Colonic mucosa (tissue), 4 donors: ENCODE measurements at regions of chr13 and their contacts with region 1.

Region 1: DNA sequence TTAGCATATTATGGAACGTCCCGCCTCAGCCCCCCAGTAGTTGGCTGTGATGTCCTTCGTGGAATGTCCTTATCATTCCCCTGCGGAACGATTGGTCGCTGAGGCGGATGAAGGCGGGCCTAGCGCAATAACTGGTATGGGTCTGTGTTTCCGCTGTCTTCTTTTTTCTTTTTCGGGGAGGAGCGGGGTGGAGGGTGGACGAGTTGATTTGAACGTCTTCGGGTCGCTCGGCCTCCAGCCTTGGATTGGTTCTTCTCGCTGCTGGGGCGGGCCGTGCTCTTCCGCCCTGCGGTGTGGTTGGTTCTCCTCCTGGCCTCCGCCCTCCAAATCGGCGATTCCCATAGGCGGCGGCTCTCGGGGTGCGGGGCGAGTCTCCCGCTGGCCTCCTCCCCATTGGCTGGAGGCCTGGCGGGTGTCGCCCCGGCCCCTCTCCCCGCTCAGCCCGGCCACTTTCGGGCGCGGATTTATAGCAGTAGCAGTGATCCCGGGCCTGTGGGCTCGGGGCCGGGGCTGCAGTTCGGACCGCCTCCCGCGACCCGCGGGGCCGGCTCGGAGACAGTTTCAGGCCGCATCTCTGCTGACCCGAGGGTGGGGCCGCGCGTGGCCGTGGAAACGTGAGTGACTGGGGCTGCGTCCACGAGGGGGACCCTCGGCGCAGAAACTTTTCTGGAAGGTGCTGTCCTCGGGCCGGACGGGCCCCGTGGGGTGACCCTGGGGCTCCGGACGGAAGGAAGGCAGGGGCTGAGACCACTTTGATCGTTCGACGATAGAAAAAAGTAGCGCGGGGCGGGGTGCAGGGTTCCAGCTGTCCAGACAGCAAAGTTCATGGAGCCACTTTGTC is 2.1 kb downstream of the ING1 start:
- DNase-seq: peak; percentile 99
- H3K4me3 ChIP-seq: peak overlapping the region; percentile 92
- H3K27ac ChIP-seq: peak overlapping the region; percentile 100
- H3K4me1 ChIP-seq: peaks cover 3% of the 10 kb centered on the region
- H3K27me3 ChIP-seq: no peaks in the 10 kb centered on the region
- CTCF ChIP-seq: no peak

Region 2: GRCh38 chr13:110853235-110853721 is 137.7 kb after region 1 on chr13:
- intact Hi-C with region 1: no loop called
- DNase-seq: no peak
- H3K4me3 ChIP-seq: no peak overlapping the region
- H3K27ac ChIP-seq: no peak overlapping the region
- H3K4me1 ChIP-seq: no peaks in the 10 kb centered on the region
- H3K27me3 ChIP-seq: no peaks in the 10 kb centered on the region
- CTCF ChIP-seq: no peak

Region 3: DNA sequence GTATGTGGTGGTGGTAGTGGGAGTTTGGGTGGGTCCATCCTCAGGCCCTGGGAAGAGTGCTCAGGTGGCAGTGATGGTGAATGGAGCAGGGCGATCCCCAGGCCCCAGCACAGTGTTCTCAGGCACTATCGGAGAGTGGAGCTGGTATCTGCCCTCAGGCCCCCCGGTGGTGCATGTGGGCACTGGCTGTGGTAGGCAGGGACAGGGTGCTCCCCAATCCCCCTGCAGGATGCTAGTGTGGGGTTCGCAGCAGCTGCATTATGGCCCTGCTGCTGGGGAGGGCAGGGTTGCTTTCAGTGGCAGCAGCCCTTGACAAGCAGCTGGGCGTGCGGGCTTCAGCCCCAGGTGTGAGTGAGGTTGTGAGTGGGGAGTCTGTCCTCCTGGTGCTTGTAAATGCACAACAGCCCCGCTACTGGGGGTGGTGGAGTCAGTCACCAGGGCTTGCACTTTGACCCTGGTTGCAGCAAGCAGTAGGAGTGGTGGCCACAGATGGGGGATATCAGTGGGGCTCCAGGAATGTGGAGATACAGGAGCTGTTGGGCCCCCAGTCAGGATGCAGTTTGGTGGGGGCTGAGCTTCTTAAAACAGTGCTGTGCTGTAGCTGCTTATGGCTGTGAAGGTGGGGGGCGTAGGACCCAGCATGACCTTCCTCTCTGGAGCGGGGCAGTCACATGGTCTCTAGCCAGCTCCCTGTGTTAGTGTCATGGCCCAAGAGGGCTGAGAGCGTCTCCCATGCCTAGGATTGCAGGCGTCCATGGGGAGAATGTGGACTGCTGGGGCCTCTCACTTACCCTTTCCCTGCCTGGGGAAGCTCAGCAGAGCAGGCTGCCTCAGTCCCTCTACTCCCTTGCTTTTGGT is 360.8 kb after region 1 on chr13:
- intact Hi-C with region 1: no loop called
- DNase-seq: no peak
- H3K4me3 ChIP-seq: no peak overlapping the region
- H3K27ac ChIP-seq: no peak overlapping the region
- H3K4me1 ChIP-seq: no peaks in the 10 kb centered on the region
- H3K27me3 ChIP-seq: no peaks in the 10 kb centered on the region
- CTCF ChIP-seq: no peak

Region 4: DNA sequence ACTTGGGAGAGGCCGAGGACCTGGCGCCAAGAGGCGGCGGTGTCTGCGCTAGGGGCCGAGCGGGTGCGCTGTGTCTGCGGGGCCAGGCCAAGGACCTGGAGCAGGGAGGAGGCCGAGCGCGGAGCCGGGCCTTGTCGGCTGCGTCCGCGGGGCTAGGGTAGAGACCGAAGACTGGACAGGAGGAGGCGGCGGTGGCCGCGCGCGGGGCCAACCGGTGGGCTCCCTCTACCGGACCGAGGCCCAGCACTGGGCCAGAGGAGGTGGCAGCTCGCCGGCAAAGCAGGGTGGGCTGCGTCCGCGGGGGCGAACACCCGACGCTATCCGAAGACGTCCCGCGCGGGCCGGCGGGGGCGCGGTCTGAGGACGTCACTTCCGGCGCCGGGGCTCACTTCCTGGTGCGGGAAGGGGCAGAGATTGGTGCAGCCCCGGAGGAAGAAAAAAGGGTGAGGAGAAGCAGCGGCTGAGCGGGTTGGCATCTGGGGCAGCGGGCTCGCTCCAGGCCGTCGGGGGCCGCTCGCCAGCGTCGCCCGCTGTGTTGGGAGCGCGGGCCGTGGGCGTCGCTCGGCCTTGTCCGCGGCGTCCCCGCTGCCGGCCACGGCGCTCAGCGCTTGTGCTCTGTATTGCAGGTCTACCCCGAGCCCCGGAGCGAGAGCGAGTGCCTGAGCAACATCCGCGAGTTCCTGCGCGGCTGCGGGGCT is 437.8 kb after region 1 on chr13:
- intact Hi-C with region 1: loop called (anchors 5 kb)
- DNase-seq: peak; percentile 94
- H3K4me3 ChIP-seq: peak overlapping the region; percentile 88
- H3K27ac ChIP-seq: peak overlapping the region; percentile 99
- H3K4me1 ChIP-seq: peaks cover 11% of the 10 kb centered on the region
- H3K27me3 ChIP-seq: no peaks in the 10 kb centered on the region
- CTCF ChIP-seq: no peak